ENCODE measurements at regions of chr6 and their contacts with region 1.

Region 1: GRCh38 chr6:26576929-26577719 is 19.6 kb upstream of the ABT1 start:
- DNase-seq: peak; percentile 65 to 69
- H3K4me3 ChIP-seq: peak overlapping the region; percentile 60
- H3K27ac ChIP-seq: no peak overlapping the region
- H3K4me1 ChIP-seq: 0 out of 2 replicates have a peak, but pooled peaks cover 6% of the 10 kb centered on the region
- H3K27me3 ChIP-seq: no peaks in the 10 kb centered on the region
- CTCF ChIP-seq: no peak

Region 2: DNA sequence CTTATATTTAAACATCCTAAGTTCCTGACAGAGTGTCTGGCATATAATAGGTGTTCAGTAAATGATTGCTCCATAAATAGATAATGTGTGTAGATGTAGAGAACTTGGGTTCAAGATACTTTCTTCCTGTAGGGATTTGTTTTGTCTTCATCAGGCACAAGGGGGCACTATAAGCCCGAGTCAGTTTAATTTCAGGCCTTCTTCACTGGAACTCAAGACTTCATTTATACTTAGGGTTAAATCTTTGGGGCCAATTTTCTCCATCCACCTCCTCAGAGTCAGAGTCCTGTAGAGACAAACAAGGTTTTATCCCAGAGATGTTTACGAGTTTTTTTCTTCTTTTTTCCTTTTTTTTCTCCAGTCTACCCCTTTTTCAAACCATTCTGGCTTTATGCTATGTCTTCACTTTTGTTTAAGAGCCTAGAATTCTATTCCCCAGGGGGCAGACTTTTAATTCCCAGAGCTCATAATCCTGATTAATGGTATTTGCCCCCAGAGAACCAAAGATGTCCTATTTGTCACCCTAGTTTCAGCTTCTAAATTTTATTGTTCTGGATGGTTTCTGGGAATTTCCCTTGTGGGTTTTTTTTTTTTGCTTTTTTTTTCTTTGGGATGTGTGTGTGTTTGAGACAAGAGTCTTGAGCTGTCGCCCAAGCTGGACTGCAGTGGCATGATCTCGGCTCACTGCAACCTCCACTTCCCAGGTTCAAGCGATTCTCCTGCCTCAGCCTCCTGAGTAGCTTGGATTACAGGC is 401.5 kb before region 1 on chr6:
- CTCF ChIA-PET with region 1: no interaction called
- POLR2A ChIA-PET with region 1: interaction called, 3 read pairs
- intact Hi-C with region 1: loop called (anchors 5 kb)
- DNase-seq: no peak
- H3K4me3 ChIP-seq: no peak overlapping the region
- H3K27ac ChIP-seq: no peak overlapping the region
- H3K4me1 ChIP-seq: peaks cover 23% of the 10 kb centered on the region
- H3K27me3 ChIP-seq: no peaks in the 10 kb centered on the region
- CTCF ChIP-seq: peak; percentile 82

Region 3: DNA sequence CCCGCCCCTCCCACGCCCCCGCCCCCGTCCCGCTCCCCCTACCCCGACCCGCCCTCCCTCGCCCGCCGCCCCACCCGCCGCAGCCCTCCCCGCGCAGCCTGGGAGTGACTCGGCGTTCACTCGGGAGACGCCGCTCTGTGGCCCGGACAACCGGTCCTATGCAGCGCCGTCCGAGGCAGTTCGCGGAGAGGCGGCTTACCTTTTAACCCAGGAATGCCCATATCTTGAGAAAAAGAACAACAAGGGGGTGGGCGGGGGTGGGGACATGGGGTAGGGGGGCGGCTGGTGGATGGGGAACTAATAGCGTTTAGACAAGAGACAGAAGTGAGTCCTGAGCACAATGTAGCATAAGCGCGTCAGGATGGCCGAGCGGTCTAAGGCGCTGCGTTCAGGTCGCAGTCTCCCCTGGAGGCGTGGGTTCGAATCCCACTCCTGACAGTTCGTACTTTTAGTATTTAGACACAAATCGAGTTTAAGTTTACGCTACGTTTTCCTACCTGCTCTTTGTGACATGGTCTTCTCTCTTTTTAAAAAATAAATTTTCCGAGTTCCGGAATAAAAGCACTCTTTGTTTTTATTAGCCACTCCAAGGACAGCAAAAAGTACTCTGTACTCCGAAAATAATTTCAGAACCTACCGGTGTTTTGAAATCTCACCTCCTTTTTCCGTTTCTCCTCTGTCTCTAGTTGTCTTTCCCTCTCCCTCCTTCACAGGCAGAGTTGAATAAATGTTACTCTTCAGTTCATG is 56.1 kb before region 1 on chr6:
- CTCF ChIA-PET with region 1: no interaction called
- POLR2A ChIA-PET with region 1: no interaction called
- intact Hi-C with region 1: no loop called
- DNase-seq: peak; percentile 78 to 89
- H3K4me3 ChIP-seq: peak overlapping the region; percentile 85
- H3K27ac ChIP-seq: peak overlapping the region; percentile 93
- H3K4me1 ChIP-seq: peaks cover 29% of the 10 kb centered on the region
- H3K27me3 ChIP-seq: no peaks in the 10 kb centered on the region
- CTCF ChIP-seq: no peak

Region 4: GRCh38 chr6:26607434-26608230 is 30.5 kb after region 1 on chr6:
- CTCF ChIA-PET with region 1: no interaction called
- POLR2A ChIA-PET with region 1: no interaction called
- intact Hi-C with region 1: no loop called
- DNase-seq: peak; percentile 49 to 56
- H3K4me3 ChIP-seq: peak overlapping the region; percentile 37; the same call in 1 of the 2 replicates
- H3K27ac ChIP-seq: no peak overlapping the region
- H3K4me1 ChIP-seq: no peaks in the 10 kb centered on the region
- H3K27me3 ChIP-seq: no peaks in the 10 kb centered on the region
- CTCF ChIP-seq: peak; percentile 83